AG04450 (cell line): ENCODE measurements at regions of chr7 and their contacts with region 1.

Region 1: DNA sequence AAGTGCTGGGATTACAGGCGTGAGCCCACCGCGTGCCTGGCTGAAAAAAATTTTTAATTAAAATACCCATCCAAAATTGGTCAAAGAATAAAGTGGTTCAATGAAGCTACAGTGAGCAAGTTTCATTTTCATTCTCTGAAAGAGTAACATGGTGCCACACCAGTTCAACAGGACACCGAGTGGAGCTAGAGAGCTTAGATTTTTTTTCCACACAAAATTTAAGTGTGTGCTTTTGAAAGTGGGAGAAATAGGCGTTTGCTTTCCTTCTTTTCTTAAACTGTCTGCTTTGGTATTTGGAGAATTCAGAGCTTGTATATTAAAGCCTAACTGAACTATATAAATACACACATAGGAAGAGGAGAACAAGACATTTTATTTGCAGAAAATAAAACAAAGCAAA is 43.4 kb downstream of the BPGM start:
- DNase-seq: peak; percentile 53
- H3K4me3 ChIP-seq: no peak overlapping the region
- H3K27ac ChIP-seq: no peak overlapping the region
- H3K27me3 ChIP-seq: no peaks in the 10 kb centered on the region
- CTCF ChIP-seq: peak; percentile 76

Region 2: DNA sequence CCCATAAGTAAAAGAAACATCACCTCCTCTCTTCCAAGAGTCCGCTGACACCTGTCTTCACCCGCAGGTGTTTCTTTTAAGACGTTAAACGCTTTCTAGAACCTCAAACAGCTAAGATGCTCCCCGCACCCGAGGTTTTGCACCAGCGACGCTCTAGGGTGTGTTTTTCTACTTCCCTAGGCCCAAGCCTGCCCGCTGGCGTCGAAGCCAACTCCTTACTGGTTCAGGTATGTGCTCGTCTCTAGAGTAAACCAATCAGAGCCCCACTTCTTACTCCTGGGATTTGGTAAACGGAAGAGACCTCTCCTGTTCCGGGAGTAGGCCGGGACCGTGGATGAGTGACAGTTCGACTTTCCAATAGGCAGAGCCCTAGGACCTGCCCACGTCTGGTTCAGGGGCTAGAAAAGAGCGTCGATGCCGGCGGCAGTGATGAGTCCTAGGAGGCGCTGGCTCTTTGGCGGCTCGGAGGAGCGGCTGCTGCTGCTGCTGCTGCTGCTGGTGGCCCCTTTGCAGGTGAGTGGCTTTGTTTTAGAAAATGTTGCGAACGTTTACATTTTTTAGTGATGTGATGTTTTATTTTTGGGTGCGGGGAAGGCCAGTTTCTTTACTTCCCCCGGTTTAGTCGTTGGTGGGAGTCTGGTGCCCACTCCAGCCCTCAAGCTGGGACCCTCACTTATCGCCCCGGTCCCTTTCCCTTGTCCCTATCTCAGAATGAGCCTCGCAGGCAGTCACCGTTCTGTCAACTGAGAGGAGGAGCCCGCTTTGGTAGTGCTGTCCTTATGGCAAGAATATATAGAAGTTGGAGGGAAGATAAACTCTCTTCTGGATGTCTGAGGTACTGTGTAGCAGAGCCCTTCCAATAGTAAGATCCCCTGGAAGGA is 43.4 kb before region 1 on chr7 and contains the start of gene BPGM:
- CTCF ChIA-PET with region 1: interaction called, 12 read pairs
- POLR2A ChIA-PET with region 1: interaction called, 5 read pairs
- DNase-seq: peak; percentile 100
- H3K4me3 ChIP-seq: peak within 1 kb of the TSS; percentile 75
- H3K27ac ChIP-seq: peak within 1 kb of the TSS; percentile 67
- H3K27me3 ChIP-seq: no peaks in the 10 kb centered on the region
- CTCF ChIP-seq: peak; percentile 27; the same call in 1 of the 2 replicates
- polyA plus RNA-seq, gene BPGM: 31.2 and 43.1 TPM in 2 replicates

Region 3: DNA sequence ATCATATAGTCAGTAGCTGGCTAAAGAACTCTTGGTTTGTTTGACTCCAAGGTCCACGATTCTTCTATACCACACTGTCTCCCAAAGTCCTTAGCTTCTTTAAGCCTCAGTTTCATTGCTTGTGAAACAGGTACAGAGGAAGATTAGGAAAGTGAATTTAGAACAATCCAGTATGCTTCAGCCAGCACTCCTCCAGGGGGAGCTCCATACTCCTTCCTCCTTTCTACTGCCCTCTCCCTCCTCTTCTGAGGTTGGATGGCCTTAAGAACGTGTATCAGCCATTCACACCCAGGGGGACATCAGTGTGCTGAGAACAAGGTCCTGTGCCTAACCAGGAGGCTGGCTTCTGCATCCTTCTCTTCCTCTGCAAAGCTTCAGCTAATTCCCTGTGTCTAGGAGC is 34.6 kb after region 1 on chr7:
- CTCF ChIA-PET with region 1: interaction called, 19 read pairs
- POLR2A ChIA-PET with region 1: interaction called, 4 read pairs
- DNase-seq: no peak
- H3K4me3 ChIP-seq: no peak overlapping the region
- H3K27ac ChIP-seq: no peak overlapping the region
- H3K27me3 ChIP-seq: no peaks in the 10 kb centered on the region
- CTCF ChIP-seq: peak; percentile 66

Region 4: DNA sequence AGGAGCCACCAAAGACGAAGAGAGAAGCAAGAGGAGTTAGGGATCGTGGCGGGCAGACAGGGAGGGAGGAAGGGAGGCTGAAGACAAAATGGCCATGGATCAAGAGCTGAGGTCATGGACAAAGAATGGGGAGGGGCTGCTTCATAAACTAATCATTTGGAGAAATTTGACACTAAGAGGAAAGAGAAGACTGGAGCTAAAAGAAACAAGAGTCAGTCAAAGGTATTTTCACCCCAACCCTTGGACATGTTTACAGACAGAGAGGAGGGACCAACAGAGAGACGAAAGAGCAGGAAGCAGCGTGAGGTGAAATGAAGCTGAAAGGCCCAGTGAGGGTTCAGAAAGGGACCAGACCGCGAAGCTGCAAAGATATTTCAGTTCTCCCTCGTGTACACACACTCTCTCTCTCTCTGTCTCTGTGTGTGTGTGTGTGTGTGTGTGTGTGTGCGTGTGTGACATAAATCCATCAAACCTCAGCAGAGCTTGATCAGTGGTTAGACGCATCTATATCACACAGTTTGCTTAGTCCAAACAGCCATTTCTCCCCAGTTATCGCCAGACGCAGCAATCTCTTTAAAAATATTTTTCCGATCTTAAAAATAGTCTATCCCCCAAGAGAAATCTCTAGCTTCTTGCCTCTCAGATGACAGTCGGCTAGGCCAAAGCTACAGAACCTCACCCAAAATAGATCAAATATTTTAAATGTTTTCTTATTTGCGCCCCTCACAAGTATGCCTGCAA is 76.9 kb after region 1 on chr7:
- CTCF ChIA-PET with region 1: interaction called, 11 read pairs
- POLR2A ChIA-PET with region 1: interaction called, 3 read pairs
- DNase-seq: no peak
- H3K4me3 ChIP-seq: no peak overlapping the region
- H3K27ac ChIP-seq: no peak overlapping the region
- H3K27me3 ChIP-seq: no peaks in the 10 kb centered on the region
- CTCF ChIP-seq: no peak

Region 5: GRCh38 chr7:134943764-134944400 is 253.9 kb after region 1 on chr7:
- CTCF ChIA-PET with region 1: interaction called, 15 read pairs
- POLR2A ChIA-PET with region 1: no interaction called
- DNase-seq: no peak
- H3K4me3 ChIP-seq: no peak overlapping the region
- H3K27ac ChIP-seq: no peak overlapping the region
- H3K27me3 ChIP-seq: no peaks in the 10 kb centered on the region
- CTCF ChIP-seq: no peak

Region 6: GRCh38 chr7:135170274-135170997 is 480.4 kb after region 1 on chr7 and contains the start of gene CYREN:
- CTCF ChIA-PET with region 1: interaction called, 11 read pairs
- POLR2A ChIA-PET with region 1: no interaction called
- DNase-seq: peak; percentile 74
- H3K4me3 ChIP-seq: peak within 1 kb of the TSS; percentile 78
- H3K27ac ChIP-seq: peak within 1 kb of the TSS; percentile 97
- H3K27me3 ChIP-seq: no peaks in the 10 kb centered on the region
- CTCF ChIP-seq: peak; percentile 65
- polyA plus RNA-seq, gene CYREN: 28.4 and 30.6 TPM in 2 replicates